PC-9 (cell line): ENCODE measurements at regions of chr10 and their contacts with region 1.

Region 1: DNA sequence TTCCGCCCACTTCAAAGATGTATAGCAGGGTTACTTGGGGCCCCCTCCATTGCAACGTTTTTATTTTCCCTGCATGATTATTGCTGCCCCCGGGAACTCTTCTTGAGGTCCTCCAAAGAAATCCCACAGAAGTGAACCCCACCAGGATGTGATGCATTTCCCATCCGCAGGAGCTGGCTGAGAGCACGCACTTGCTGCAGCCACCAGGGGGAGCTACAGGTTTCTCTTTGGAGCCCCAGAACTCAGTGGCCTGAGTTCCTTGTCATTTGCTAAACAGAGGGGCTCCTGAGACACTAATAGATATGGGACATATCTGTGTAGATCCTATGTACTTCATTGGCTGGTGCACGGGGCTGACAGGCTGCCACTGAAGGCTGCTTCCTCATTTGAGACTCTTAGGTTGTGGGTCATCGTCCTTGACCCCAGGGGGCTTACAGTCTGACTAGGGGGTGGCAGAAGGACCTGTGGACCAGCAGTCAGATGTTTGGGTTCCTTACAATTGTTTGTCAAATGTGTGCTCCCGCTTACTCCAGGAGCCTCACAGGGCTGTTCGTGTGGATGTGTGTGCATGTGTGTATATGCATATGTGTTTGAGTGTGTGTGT is 52.3 kb upstream of the ENO4 start:
- DNase-seq: peak; percentile 53 to 57
- H3K4me3 ChIP-seq: no peak overlapping the region
- H3K27ac ChIP-seq: no peak overlapping the region
- H3K4me1 ChIP-seq: no peaks in the 10 kb centered on the region
- H3K27me3 ChIP-seq: peaks cover 4% of the 10 kb centered on the region; the same call in 1 of the 2 replicates
- CTCF ChIP-seq: peak; percentile 95

Region 2: GRCh38 chr10:117074621-117075020 is 277.6 kb after region 1 on chr10:
- CTCF ChIA-PET with region 1: no interaction called
- POLR2A ChIA-PET with region 1: no interaction called
- intact Hi-C with region 1: loop called (anchors 5 kb)
- DNase-seq: no peak
- H3K4me3 ChIP-seq: no peak overlapping the region
- H3K27ac ChIP-seq: no peak overlapping the region
- H3K4me1 ChIP-seq: peaks cover 15% of the 10 kb centered on the region; the same call in 1 of the 2 replicates
- H3K27me3 ChIP-seq: no peaks in the 10 kb centered on the region
- CTCF ChIP-seq: no peak

Region 3: DNA sequence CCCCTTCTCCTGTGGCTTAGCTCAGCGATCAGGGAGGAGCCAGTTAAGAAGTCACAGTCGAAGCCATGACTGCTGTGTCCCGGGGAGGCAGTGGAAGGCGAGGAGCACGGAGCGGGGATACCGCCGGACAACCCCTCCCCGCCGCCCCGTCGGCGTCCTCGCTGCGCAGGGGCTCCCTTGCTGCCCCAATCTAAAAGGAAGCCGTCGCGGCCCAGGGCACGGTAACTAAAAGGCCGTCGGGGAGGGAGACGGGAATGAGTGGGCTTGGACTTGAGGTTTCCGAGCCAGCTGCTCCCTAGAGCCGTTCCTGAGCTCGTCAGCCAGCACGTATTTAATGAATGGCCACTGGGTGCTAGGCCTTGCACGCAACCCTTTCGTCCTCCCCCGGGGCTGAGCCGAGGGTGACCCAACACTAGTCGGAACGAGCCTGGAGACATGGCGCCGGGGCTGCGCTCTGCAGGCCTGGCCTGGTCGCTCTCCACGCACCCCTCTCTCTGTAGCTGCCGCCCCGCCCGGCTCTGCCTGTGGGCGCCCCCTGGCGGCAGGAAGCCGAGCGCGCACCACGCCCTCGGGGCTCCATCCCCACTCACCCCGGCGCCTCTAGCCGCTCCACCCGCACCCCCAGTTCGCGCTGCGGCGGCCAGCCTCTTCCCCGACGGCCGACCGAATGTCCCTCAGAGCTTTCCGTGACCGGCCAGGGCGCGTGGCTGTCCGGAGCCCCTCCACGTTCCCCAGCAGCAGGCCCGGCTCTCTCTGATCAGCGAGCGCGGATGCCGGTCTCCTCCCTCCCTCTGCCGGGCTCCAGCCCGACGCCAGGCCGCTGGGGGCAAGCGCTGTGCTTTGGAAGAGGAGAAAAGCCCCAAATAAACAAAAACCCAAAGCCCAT is 371.0 kb after region 1 on chr10:
- CTCF ChIA-PET with region 1: interaction called, 7 read pairs
- POLR2A ChIA-PET with region 1: no interaction called
- intact Hi-C with region 1: loop called (anchors 1 kb)
- DNase-seq: no peak
- H3K4me3 ChIP-seq: no peak overlapping the region
- H3K27ac ChIP-seq: no peak overlapping the region
- H3K4me1 ChIP-seq: no peaks in the 10 kb centered on the region
- H3K27me3 ChIP-seq: peaks cover 27% of the 10 kb centered on the region
- CTCF ChIP-seq: peak; percentile 45